Heart left ventricle (tissue), 16 donors: ENCODE measurements at regions of chr1 and their contacts with region 1.

Region 1: DNA sequence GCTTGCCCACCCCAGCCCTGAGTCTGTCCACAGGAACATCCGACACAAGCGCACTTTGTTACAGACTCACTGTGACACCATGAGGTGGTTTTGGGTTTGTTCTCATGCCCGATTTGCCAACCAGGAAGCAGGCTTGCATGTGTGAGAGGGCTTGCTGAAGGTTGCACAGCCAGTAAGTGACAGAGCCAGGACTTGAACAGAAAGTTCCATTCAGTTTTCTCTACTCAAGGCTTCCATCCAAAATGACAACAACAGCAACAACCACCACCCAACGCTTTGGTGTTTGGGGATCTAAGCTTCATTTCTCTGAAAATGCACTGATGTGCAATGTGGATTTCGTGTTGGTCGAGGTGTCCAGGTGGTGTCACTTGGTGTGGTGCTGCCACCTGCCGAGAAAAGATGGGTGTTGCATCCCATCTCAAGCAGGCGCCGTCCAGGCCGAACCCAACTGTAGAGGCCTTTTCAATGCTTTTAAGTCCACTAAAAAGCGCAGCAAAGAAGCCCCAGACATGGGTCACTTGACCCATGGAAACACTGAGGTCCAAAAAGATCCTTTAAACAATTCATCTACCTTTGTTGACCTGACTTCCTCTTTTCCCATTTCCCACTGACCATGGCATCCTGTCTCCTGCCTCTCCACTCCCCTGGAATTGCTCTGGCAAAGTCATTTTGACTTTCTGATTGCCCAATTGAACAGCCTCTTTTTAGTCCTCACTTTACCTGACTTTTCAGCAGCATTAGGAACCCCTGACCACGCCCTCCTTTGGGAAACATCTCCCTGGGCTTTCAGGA is 12.2 kb downstream of the CITED4 start:
- DNase-seq: peak; percentile 58 to 80 (median 66)
- ATAC-seq: peak; percentile 71 to 87 (median 86)
- H3K4me3 ChIP-seq: no peak overlapping the region
- H3K27ac ChIP-seq: no peak overlapping the region
- H3K4me1 ChIP-seq: peaks cover 0 to 7% (median 0%) of the 10 kb centered on the region in 12 donors
- H3K27me3 ChIP-seq: no peaks in the 10 kb centered on the region
- CTCF ChIP-seq: peak; percentile 85 to 93 (median 88)
- POLR2A ChIP-seq: no peak

Region 2: GRCh38 chr1:40612345-40612831 is 237.6 kb before region 1 on chr1:
- intact Hi-C with region 1: loop called (anchors 1 to 5 kb)
- DNase-seq: peak in 4 of 5 donors; percentile 50 to 68 (median 56)
- ATAC-seq: peak; percentile 47 to 92 (median 88)
- H3K4me3 ChIP-seq: no peak overlapping the region
- H3K27ac ChIP-seq: no peak overlapping the region
- H3K4me1 ChIP-seq: peaks cover 0 to 3% (median 0%) of the 10 kb centered on the region in 12 donors
- H3K27me3 ChIP-seq: no peaks in the 10 kb centered on the region
- CTCF ChIP-seq: peak; percentile 72 to 90 (median 80)
- POLR2A ChIP-seq: no peak

Region 3: GRCh38 chr1:40625066-40625465 is 224.9 kb before region 1 on chr1:
- intact Hi-C with region 1: loop called in 2 of 10 experiments (anchors 5 kb)
- DNase-seq: peak in 4 of 5 donors; percentile 23 to 52 (median 34)
- ATAC-seq: peak; percentile 72 to 92 (median 84)
- H3K4me3 ChIP-seq: no peak overlapping the region
- H3K27ac ChIP-seq: no peak overlapping the region
- H3K4me1 ChIP-seq: peaks cover 0 to 6% (median 0%) of the 10 kb centered on the region in 12 donors
- H3K27me3 ChIP-seq: no peaks in the 10 kb centered on the region
- CTCF ChIP-seq: peak in 10 of 12 donors; percentile 25 to 56 (median 33)
- POLR2A ChIP-seq: no peak

Region 4: DNA sequence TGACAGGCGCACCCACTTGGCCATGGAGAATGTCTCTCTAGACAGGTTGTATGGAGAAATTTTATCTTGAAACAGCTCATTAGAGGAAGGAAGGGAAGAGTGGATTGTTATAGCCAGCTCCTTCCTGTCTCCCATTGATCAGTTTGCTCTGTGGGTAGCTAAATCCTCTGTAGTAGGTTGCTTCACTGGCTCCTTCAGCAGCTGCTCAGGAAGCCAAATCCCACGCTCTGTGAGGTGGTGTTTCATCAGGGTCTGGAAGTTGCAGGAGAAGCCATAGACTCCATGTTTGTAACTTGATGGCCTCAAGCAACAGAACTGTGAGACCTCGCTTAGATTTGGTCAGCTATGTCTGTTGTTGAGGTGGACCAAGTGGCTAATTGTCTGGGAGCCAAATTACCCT is 165.3 kb before region 1 on chr1:
- intact Hi-C with region 1: loop called in 1 of 10 experiments (anchors 10 kb)
- DNase-seq: no peak
- ATAC-seq: no peak
- H3K4me3 ChIP-seq: no peak overlapping the region
- H3K27ac ChIP-seq: no peak overlapping the region
- H3K4me1 ChIP-seq: peaks cover 0 to under 1% (median 0%) of the 10 kb centered on the region in 12 donors
- H3K27me3 ChIP-seq: no peaks in the 10 kb centered on the region
- CTCF ChIP-seq: no peak
- POLR2A ChIP-seq: no peak

Region 5: GRCh38 chr1:40774266-40774998 is 75.6 kb before region 1 on chr1:
- intact Hi-C with region 1: loop called (anchors 2 to 5 kb)
- DNase-seq: peak in 2 of 5 donors; percentile 38 to 53
- ATAC-seq: peak in 3 of 4 donors; percentile 36 to 68 (median 56)
- H3K4me3 ChIP-seq: no peak overlapping the region
- H3K27ac ChIP-seq: peak overlapping the region in 1 of 12 donors; percentile 9
- H3K4me1 ChIP-seq: peaks cover 0 to 15% (median 5%) of the 10 kb centered on the region in 12 donors
- H3K27me3 ChIP-seq: no peaks in the 10 kb centered on the region
- CTCF ChIP-seq: peak; percentile 64 to 86 (median 76)
- POLR2A ChIP-seq: no peak

Region 6: GRCh38 chr1:40783001-40783905 is 66.7 kb before region 1 on chr1 and contains the start of gene KCNQ4:
- intact Hi-C with region 1: loop called in 2 of 10 experiments (anchors 5 kb)
- DNase-seq: peak; percentile 60 to 80 (median 71)
- ATAC-seq: peak in 3 of 4 donors; percentile 66 to 73 (median 67)
- H3K4me3 ChIP-seq: peak within 1 kb of the TSS; percentile 10 to 64 (median 53)
- H3K27ac ChIP-seq: peak within 1 kb of the TSS in 9 of 12 donors; percentile 4 to 88 (median 55)
- H3K4me1 ChIP-seq: peaks cover 0 to 38% (median 13%) of the 10 kb centered on the region in 12 donors
- H3K27me3 ChIP-seq: peaks cover 0 to 19% (median 0%) of the 10 kb centered on the region in 9 donors
- CTCF ChIP-seq: no peak
- POLR2A ChIP-seq: no peak
- total RNA-seq, gene KCNQ4: 1.3 to 4.4 (median 2.2) TPM

Region 7: GRCh38 chr1:40886318-40887011 is 36.5 kb after region 1 on chr1:
- intact Hi-C with region 1: no loop called
- DNase-seq: no peak
- ATAC-seq: no peak
- H3K4me3 ChIP-seq: no peak overlapping the region
- H3K27ac ChIP-seq: no peak overlapping the region
- H3K4me1 ChIP-seq: peaks cover 0 to 8% (median 0%) of the 10 kb centered on the region in 12 donors
- H3K27me3 ChIP-seq: peaks cover 7 to 36% (median 18%) of the 10 kb centered on the region in 9 donors
- CTCF ChIP-seq: no peak
- POLR2A ChIP-seq: no peak

Region 8: DNA sequence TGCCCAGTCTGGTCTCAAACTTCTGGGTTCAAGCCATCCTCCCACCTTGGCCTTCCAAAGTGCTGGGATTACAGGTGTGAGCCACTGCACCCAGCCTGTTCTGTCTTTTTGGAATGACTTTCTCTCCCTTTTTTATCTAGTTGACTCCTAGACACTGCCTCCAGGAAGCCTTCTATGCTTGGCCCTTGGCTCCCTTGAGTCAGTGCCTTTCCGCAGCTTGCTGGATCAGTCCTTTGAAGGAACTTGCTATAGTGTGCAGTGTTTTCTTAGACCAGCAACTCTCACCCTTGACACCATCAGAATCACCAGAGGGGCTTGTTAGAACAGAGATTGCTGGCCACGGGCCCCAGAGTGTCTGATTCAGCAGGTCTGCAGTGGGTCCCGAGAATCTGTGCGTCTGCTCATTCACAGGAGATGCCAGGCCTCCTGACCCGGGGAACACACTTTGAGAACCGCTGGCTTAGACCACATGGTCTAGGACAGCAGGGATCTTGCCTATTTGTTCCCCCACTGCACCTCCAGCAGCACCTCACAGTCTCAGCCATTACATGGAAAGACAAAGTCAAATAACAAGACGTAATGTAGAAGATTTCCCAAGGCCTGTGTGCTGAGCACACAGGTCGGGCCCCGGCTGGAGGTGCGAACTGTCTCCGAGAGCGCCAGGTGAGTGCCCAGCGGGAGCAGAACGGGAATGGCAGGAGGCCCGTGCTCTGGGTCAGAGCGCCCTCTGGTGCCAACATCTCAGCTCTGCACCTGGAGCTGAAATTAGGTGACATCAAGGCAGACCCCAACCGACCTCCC is 102.1 kb after region 1 on chr1:
- intact Hi-C with region 1: loop called (anchors 1 to 2 kb)
- DNase-seq: peak; percentile 59 to 83 (median 65)
- ATAC-seq: peak in 3 of 4 donors; percentile 81 to 87 (median 85)
- H3K4me3 ChIP-seq: no peak overlapping the region
- H3K27ac ChIP-seq: no peak overlapping the region
- H3K4me1 ChIP-seq: peaks cover 0 to 13% (median 1%) of the 10 kb centered on the region in 12 donors
- H3K27me3 ChIP-seq: peaks cover 0 to 12% (median 0%) of the 10 kb centered on the region in 9 donors
- CTCF ChIP-seq: peak; percentile 86 to 94 (median 92)
- POLR2A ChIP-seq: no peak

Region 9: DNA sequence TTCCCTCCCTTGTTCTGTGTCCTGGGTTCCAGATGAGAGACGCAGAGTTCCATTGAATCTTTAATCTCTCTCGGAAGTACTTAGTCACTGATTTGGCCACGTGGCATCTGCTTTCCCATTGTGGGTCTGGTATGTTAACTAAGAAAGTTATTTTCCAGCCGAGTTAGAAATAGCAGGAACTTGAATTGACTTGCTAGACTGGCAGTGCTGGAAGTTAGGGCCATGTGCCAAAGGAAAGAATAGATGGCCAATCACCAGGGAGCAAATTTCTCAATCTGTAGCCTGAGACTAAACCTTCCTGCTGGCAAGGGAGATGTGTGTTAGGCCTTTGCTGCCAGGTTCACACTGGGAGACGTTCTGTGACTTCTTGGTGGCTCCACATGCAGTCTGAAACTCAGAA is 195.7 kb after region 1 on chr1:
- intact Hi-C with region 1: no loop called
- DNase-seq: peak in 4 of 5 donors; percentile 36 to 74 (median 43)
- ATAC-seq: peak; percentile 72 to 90 (median 84)
- H3K4me3 ChIP-seq: peak overlapping the region in 1 of 12 donors; percentile 1
- H3K27ac ChIP-seq: peak overlapping the region in 11 of 12 donors; percentile 25 to 74 (median 58)
- H3K4me1 ChIP-seq: peaks cover 0 to 34% (median 26%) of the 10 kb centered on the region in 12 donors
- H3K27me3 ChIP-seq: no peaks in the 10 kb centered on the region
- CTCF ChIP-seq: no peak
- POLR2A ChIP-seq: no peak